ENCODE measurements at regions of chr15 and their contacts with region 1.

Region 1: GRCh38 chr15:42094512-42094963 is at the start of gene PLA2G4D:
- DNase-seq: peak; percentile 58
- H3K4me3 Mint-ChIP-seq: no peak within 1 kb of the TSS
- H3K27ac Mint-ChIP-seq: no peak within 1 kb of the TSS
- H3K4me1 Mint-ChIP-seq: peaks cover 10% of the 10 kb centered on the region
- H3K27me3 Mint-ChIP-seq: no peaks in the 10 kb centered on the region
- CTCF ChIP-seq: no peak
- total RNA-seq, gene PLA2G4D: not detected in 2 replicates

Region 2: DNA sequence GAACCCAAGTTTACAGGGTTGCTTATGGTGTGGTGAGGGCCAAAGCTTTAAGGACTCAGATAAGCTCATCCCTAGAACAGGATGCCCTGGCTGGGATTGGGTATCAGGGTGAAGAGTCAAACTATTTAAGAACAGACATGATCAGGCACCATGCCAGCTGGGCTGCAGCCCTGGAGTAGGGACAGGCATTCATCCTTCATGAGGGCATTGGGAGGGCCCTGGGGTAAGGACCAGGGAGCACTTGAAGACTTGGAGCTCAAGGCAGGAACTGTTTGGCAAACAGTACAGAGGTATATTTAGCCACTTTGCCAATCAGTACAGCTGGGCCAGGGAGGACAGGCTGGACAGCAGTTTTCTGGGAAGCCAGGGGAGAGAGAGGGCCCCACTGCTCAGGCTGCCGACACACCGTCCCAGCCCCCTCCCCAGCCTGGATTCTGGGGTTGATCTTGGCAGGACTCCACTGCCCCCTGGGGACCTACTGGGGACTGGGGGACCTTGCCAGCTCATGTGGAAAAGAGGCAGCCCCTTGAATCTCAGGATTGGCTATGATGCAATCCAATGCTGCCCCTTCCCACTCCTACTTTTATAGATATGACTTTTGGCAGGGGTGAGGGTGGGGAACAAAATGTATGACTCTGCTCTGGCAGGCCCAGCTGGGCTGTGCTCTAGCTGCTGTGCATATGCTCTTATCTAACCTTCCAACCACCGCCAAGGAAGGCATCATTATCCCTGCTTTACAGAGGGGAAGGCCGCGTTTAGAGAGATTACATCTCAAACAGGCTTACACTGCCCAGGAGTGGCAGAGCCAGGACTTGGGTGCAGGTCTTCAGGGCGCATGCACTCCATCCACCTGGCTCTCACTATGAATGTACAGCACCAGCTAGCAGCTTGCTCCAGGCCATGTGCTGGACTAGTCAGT is 76.0 kb before region 1 on chr15:
- CTCF ChIA-PET with region 1: no interaction called
- POLR2A ChIA-PET with region 1: no interaction called
- intact Hi-C with region 1: no loop called
- DNase-seq: no peak
- H3K4me3 Mint-ChIP-seq: no peak overlapping the region
- H3K27ac Mint-ChIP-seq: no peak overlapping the region
- H3K4me1 Mint-ChIP-seq: peaks cover 5% of the 10 kb centered on the region
- H3K27me3 Mint-ChIP-seq: no peaks in the 10 kb centered on the region
- CTCF ChIP-seq: no peak

Region 3: GRCh38 chr15:42072141-42072685 is 22.3 kb before region 1 on chr15:
- CTCF ChIA-PET with region 1: no interaction called
- POLR2A ChIA-PET with region 1: no interaction called
- intact Hi-C with region 1: no loop called
- DNase-seq: no peak
- H3K4me3 Mint-ChIP-seq: no peak overlapping the region
- H3K27ac Mint-ChIP-seq: no peak overlapping the region
- H3K4me1 Mint-ChIP-seq: no peaks in the 10 kb centered on the region
- H3K27me3 Mint-ChIP-seq: no peaks in the 10 kb centered on the region
- CTCF ChIP-seq: no peak

Region 4: DNA sequence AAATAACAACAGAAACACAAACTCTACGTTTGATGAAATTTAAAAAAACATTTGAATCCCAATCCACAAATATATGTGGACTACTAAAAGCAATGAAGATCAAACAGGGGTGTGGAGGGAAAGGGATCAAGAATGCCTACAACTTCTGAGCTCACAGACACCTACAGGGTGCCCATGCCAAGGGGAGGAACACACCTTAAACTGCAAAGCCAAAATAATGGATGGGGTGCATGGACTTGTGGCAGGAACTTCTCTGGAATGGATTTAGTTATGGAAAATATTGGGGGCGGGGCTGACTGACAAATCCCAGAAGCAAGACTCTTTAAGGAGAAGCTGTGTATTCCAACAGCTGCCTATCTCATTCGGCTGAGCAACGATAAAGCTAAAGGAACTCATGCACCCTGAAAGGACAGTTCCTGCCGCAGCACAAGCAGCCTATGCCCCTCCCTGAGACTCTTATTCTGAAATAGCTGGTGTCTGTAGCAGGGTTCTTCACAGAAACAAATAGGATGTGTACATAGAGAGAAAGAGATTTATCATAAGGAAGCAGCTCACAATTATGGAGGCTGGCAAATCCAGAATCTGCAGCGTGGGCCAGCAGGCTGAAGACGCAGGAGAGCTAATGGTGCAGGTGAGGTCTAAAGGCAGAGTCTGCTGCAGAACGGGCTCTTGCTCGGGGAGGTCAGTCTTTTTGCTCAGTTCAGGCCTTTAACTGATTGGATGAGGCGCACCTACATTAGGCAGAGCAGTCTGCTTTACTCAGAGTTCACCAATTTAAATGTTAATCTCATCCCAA is 24.3 kb after region 1 on chr15:
- CTCF ChIA-PET with region 1: interaction called, 4 read pairs
- POLR2A ChIA-PET with region 1: interaction called, 14 read pairs
- intact Hi-C with region 1: no loop called
- DNase-seq: no peak
- H3K4me3 Mint-ChIP-seq: no peak overlapping the region
- H3K27ac Mint-ChIP-seq: no peak overlapping the region
- H3K4me1 Mint-ChIP-seq: peaks cover 18% of the 10 kb centered on the region
- H3K27me3 Mint-ChIP-seq: no peaks in the 10 kb centered on the region
- CTCF ChIP-seq: no peak

Measured in MCF 10A (cell line).